ENCODE measurements at regions of chr19 and their contacts with region 1.

Region 1: DNA sequence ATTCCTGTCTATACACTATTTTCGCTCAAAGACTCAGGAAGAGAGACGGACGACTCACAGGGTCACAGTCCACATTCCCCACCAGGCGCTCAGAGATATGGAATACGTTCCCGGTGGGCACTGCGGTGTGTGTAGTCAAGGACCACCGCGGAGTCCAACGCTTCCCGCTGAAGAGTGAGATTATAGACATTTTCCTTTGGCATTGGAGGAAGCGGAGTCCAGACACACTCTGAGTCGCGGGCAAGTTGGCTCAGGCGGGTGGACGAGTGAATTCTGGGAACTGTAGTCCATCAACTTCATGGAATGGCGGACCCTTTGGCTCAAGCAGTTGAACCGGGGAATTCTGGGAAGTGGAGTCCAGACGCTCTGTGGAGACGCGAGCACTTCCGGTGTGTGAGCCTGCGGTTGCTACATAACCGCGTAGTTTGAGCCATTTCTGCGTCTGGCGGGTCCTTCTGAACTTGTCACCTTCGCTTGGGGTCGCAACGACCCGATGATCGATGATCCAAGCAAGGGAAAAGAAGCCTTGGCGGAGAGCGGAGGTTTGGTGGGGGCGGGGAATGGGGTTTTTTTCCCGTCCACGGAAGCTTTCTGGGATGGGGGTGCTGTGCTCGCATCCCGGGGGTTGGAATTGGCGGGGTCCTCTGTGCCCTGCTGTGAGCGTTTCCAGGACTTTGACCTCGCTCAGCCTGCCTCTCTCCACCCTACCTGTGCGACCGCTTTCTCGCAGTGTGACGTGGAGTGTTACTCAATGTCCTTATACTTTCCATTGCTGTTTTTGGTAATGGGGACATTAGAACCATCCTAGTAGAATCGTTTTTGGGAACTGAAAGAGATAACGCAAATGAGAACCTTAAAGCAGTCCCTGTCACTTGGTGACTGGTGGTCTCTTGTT is at the start of gene ZNF230:
- DNase-seq: peak; percentile 63
- ATAC-seq: peak; percentile 94
- H3K4me3 Mint-ChIP-seq: peak within 1 kb of the TSS; percentile 99
- H3K27ac Mint-ChIP-seq: peak within 1 kb of the TSS; percentile 93
- H3K4me1 Mint-ChIP-seq: peaks cover 17% of the 10 kb centered on the region
- H3K27me3 Mint-ChIP-seq: no peaks in the 10 kb centered on the region
- CTCF ChIP-seq: no peak
- total RNA-seq, gene ZNF230: 12.1 and 15.0 TPM in 2 replicates

Region 2: GRCh38 chr19:43300876-43301765 is 701.7 kb before region 1 on chr19:
- CTCF ChIA-PET with region 1: no interaction called
- POLR2A ChIA-PET with region 1: no interaction called
- intact Hi-C with region 1: no loop called
- DNase-seq: no peak
- ATAC-seq: no peak
- H3K4me3 Mint-ChIP-seq: no peak overlapping the region
- H3K27ac Mint-ChIP-seq: no peak overlapping the region
- H3K4me1 Mint-ChIP-seq: no peaks in the 10 kb centered on the region
- H3K27me3 Mint-ChIP-seq: peaks cover 7% of the 10 kb centered on the region
- CTCF ChIP-seq: no peak

Region 3: DNA sequence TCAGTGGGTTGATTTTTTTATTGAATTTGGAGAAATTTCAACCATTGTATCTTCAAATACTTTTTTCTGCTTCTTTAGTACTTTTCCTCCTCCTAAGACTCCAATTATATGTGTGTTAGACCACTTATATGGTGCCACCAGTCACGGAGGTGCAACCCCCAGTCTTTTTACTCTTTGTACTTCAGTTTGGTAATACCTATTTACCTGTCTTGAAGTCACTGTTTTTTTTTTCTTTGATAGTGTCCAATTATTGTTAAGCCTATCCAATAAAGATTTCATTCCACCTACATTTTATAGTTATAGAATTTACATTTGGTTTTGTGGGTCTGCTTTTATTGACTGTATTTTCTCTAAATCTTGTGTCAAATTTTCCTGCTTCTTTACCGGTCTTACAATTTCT is 160.8 kb before region 1 on chr19:
- CTCF ChIA-PET with region 1: no interaction called
- POLR2A ChIA-PET with region 1: no interaction called
- intact Hi-C with region 1: no loop called
- DNase-seq: no peak
- ATAC-seq: no peak
- H3K4me3 Mint-ChIP-seq: no peak overlapping the region
- H3K27ac Mint-ChIP-seq: no peak overlapping the region
- H3K4me1 Mint-ChIP-seq: no peaks in the 10 kb centered on the region
- H3K27me3 Mint-ChIP-seq: no peaks in the 10 kb centered on the region
- CTCF ChIP-seq: no peak

Region 4: DNA sequence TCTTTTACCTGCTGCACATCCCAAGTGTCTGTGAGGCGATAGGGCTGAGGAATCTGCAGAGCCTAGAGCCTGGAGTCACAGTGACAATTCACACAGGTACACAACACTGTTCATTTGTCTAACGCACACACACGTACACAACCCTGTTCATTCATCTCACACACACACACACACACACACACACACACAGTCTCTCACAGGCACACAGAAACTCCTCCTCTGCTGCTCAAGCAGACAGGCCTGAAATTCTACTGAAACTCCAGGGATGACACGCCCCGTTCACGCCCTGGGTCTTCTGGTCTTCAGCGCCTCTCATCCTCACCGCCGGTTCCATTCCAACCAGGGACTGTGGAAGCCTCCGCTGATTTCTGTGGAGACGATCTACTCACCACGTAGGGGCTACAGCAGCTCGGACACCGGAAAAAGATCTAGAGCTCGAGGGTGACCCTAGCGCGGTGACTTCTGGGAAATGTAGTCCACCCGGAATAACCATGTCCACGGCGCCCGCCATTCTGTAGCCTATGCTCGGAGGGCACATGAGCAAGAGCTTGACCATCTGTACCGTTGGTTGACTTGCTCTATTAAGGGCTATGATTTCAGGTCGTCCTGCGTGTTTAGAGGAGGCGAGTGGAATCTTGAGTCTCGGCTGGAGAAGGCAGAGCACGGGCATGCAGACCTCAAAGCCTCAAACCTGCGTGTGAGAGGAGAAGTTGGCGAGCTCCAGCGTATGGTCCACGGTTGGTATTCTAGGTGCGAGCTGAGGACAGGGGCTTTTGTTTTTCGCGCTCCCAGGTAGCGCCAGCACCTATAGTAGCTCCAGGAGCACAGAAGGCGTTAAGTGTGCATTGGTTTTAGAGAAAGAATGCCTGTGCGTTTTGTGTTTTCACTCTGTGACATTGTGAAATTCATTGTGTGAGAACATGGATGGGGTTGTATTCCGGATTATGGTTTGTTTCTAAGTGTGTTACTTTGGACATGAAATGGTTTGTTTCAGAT is 101.1 kb before region 1 on chr19:
- CTCF ChIA-PET with region 1: no interaction called
- POLR2A ChIA-PET with region 1: no interaction called
- intact Hi-C with region 1: loop called (anchors 1 kb)
- DNase-seq: peak; percentile 62
- ATAC-seq: peak; percentile 96
- H3K4me3 Mint-ChIP-seq: peak overlapping the region; percentile 93
- H3K27ac Mint-ChIP-seq: peak overlapping the region; percentile 82
- H3K4me1 Mint-ChIP-seq: peaks cover 18% of the 10 kb centered on the region
- H3K27me3 Mint-ChIP-seq: no peaks in the 10 kb centered on the region
- CTCF ChIP-seq: no peak

Region 5: DNA sequence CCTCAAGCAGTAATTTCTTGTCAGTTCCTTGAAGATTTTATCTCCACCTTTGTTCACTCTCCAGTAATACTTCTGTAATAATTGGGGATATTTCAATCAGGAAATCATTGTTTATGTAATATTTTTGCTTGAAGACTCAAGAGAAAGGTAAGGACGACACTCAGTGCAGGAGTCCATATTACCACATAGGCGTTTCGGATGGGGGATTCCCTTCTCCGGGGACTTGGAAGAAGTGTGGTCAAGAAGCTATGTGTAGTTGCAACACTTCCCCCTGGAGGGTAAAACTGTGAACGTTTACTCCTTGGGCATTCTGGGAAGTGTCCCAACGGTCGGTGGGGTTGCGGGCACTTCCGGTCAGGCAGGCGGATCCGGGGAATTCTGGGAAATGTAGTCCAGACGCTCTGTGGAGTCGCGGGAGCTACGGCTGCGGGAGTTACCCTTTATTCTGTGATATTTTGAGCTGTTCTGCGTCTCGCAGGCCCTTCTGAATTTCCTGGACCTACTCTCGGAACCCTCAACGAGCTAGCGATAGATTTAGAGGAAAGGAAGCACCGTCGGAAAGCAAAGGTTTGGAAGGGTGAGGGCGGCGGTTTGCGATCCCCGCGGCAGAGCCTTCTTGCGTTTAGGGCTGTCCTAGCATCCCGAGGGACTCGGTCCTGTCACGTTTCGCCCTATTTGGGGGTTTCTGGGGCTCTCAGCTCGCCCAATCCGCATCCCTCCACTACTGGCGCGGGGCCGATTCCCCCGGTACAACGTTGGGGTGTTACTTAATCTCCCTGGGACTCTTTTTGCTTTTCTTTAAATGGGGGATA is 51.8 kb before region 1 on chr19 and contains the start of gene ZNF221:
- CTCF ChIA-PET with region 1: no interaction called
- POLR2A ChIA-PET with region 1: interaction called, 3 read pairs
- intact Hi-C with region 1: loop called (anchors 2 kb)
- DNase-seq: peak; percentile 52
- ATAC-seq: peak; percentile 91
- H3K4me3 Mint-ChIP-seq: peak within 1 kb of the TSS; percentile 98
- H3K27ac Mint-ChIP-seq: peak within 1 kb of the TSS; percentile 82
- H3K4me1 Mint-ChIP-seq: peaks cover 10% of the 10 kb centered on the region
- H3K27me3 Mint-ChIP-seq: peaks cover 11% of the 10 kb centered on the region
- CTCF ChIP-seq: no peak
- total RNA-seq, gene ZNF221: 2.6 TPM in 2 replicates

Region 6: DNA sequence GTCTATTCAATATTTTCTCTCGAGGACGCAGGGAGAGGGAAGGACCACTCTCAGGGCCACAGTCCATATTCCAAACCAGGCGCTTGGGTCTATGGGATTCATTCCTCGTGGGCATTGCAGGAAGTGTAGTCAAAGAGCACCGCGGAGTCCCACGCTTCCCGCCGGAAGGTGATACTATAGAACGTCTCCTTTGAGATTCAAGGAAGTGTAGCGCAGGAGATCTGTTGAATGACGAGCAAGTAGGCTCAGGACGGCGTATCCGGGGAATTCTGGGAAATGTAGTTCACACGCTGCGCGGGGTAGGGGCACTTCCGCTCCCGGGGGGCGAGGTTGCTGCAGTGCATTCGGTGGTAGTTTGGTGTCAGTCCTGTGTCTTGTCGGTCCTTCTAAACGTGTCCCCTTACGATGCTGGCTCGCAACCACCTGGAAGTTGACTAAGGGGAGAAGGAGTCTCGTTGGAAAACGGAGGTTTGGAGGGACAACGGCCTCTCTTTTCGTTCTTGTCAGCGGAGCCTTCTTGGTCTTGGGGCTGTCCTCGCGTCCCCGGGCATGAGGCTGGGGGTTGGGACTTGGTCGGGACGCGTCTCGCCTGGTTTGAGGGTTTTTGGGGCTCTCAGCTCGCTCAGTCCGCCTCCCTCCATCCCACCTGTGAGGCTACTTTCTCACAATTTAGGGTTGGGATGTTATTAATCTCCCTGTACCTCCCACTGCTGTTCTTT is 69.2 kb after region 1 on chr19 and contains the start of gene ZNF284:
- CTCF ChIA-PET with region 1: no interaction called
- POLR2A ChIA-PET with region 1: interaction called, 3 read pairs
- intact Hi-C with region 1: loop called (anchors 2 kb)
- DNase-seq: peak; percentile 67
- ATAC-seq: peak; percentile 100
- H3K4me3 Mint-ChIP-seq: peak within 1 kb of the TSS; percentile 94
- H3K27ac Mint-ChIP-seq: peak within 1 kb of the TSS; percentile 80
- H3K4me1 Mint-ChIP-seq: peaks cover 26% of the 10 kb centered on the region
- H3K27me3 Mint-ChIP-seq: peaks cover 1% of the 10 kb centered on the region
- CTCF ChIP-seq: no peak
- total RNA-seq, gene ZNF284: 2.1 and 2.3 TPM in 2 replicates

Region 7: GRCh38 chr19:44141191-44142058 is 138.6 kb after region 1 on chr19 and contains the start of gene ZNF234:
- CTCF ChIA-PET with region 1: no interaction called
- POLR2A ChIA-PET with region 1: no interaction called
- intact Hi-C with region 1: loop called (anchors 1 kb)
- DNase-seq: peak; percentile 58
- ATAC-seq: peak; percentile 93
- H3K4me3 Mint-ChIP-seq: peak within 1 kb of the TSS; percentile 98
- H3K27ac Mint-ChIP-seq: peak within 1 kb of the TSS; percentile 85
- H3K4me1 Mint-ChIP-seq: peaks cover 23% of the 10 kb centered on the region
- H3K27me3 Mint-ChIP-seq: no peaks in the 10 kb centered on the region
- CTCF ChIP-seq: no peak
- total RNA-seq, gene ZNF234: 14.8 and 18.8 TPM in 2 replicates

Region 8: GRCh38 chr19:44212250-44212865 is 209.5 kb after region 1 on chr19 and contains the start of gene ZNF227:
- CTCF ChIA-PET with region 1: no interaction called
- POLR2A ChIA-PET with region 1: interaction called, 3 read pairs
- intact Hi-C with region 1: loop called (anchors 1 kb)
- DNase-seq: peak; percentile 69
- ATAC-seq: peak; percentile 93
- H3K4me3 Mint-ChIP-seq: peak within 1 kb of the TSS; percentile 95
- H3K27ac Mint-ChIP-seq: peak within 1 kb of the TSS; percentile 89
- H3K4me1 Mint-ChIP-seq: peaks cover 20% of the 10 kb centered on the region
- H3K27me3 Mint-ChIP-seq: no peaks in the 10 kb centered on the region
- CTCF ChIP-seq: no peak
- total RNA-seq, gene ZNF227: 33.1 and 36.9 TPM in 2 replicates

Measured in activated B cell treated with CpG ODN at 0.5 μM for 24 hours (primary cell).